ENCODE measurements at regions of chr1 and their contacts with region 1.

Region 1: DNA sequence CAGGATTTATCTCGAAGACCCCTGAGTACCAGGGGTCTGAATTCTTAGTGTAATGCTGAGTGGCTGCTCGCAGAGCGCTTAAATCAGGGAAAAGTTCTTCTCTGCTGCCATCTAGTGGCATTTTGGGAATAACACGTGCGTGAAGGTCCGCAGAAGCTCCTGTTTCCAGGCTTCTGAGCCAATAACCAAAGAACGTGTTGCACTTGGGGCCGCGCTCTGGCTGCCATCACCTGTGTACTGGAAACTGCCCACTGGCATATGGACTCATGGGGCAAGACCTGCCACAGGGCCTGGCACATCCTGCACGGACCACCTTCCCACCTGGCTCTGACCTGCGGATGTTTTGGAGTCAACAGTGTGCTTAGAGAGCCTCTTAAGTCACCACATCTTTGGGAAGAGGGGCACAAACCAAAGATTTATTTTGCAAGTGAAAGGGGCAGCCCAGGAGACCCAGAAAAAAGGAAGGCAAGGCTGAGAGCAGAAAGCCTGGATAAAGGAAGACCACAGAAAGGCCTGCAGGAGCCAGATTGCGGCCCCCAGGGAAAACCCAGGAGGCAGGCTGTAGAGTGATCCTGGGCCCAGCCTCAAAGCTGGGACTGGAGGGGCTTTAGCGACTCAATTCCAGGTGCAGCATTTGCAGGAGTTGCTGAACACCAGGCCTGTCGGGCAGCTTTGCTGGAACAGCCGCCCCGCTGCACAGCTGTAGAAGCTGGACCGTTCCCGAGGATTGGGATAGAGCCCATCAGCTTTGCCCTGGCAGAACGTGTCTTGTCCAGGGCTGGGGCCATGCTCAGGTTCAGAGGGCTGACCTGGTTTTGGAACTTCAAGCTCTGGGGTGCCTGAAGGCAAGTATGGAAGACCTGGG is 13.0 kb downstream of the CHIT1 start:
- DNase-seq: peak; percentile 45 to 83 (median 71)
- ATAC-seq: peak; percentile 83
- H3K4me3 ChIP-seq: no peak overlapping the region
- H3K27ac ChIP-seq: no peak overlapping the region
- H3K4me1 ChIP-seq: peaks cover 0 to 29% of the 10 kb centered on the region in 2 donors
- H3K27me3 ChIP-seq: peaks cover 0 to 19% of the 10 kb centered on the region in 2 donors
- CTCF ChIP-seq: peak; percentile 60 to 91

Region 2: GRCh38 chr1:203038891-203039608 is 177.5 kb before region 1 on chr1:
- intact Hi-C with region 1: loop called in 1 of 2 experiments (anchors 5 kb)
- DNase-seq: peak; percentile 64 to 85 (median 74)
- ATAC-seq: peak; percentile 94
- H3K4me3 ChIP-seq: no peak overlapping the region
- H3K27ac ChIP-seq: no peak overlapping the region
- H3K4me1 ChIP-seq: peaks cover 0 to 5% of the 10 kb centered on the region in 2 donors
- H3K27me3 ChIP-seq: peaks cover 0 to 20% of the 10 kb centered on the region in 2 donors
- CTCF ChIP-seq: peak; percentile 89 to 91

Region 3: DNA sequence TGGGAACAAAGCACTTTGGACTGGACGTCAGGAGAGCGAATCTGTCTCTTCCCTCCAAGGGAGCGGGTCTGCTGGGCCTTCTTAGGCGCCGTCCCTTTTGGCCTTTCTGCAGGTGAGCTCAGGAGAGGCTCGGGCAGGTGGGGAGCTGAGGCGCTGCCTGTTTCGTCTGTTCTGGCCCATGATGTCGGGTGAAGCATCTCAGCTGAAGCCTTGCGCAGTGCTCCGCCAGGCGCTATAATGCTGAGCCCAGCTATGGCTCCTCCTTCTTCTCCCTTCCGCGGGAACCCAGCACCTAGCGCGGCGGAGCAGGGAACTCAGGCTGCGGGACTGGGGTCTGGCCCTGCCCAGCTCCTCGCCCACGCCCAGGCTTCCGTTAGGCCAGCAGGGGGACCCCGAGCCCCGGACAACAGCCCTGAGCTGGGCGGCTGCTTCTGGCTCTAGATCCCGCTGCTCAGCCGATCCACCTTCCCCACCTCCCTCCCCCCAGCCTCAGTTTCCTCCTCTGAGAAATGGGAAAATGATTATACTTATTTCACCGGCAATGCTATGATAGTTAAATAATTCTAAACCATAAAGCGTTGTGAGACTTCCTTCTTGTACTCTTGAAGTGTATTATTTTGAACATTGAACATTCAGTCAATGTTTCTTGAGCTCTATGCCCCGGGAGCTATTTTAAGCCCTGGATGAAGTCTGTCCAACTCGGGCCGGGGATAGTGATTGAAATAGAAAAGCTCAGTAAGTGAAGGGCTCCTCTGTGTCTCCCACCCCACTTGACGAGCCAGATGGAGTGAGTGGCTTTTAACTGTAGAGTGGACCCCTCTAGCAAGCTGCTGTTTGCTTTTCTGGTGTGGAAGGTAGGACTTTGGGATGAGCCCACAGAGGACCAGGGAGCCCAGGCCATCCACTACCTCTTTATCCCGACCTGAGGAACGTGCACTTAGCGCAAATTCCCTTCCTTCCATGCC is 98.6 kb before region 1 on chr1:
- intact Hi-C with region 1: loop called in 1 of 2 experiments (anchors 5 kb)
- DNase-seq: peak in 3 of 4 donors; percentile 73 to 92 (median 80)
- ATAC-seq: peak; percentile 98
- H3K4me3 ChIP-seq: no peak overlapping the region
- H3K27ac ChIP-seq: no peak overlapping the region
- H3K4me1 ChIP-seq: peaks cover 0 to 7% of the 10 kb centered on the region in 2 donors
- H3K27me3 ChIP-seq: peaks cover 0 to 74% of the 10 kb centered on the region in 2 donors
- CTCF ChIP-seq: peak; percentile 72 to 77

Region 4: DNA sequence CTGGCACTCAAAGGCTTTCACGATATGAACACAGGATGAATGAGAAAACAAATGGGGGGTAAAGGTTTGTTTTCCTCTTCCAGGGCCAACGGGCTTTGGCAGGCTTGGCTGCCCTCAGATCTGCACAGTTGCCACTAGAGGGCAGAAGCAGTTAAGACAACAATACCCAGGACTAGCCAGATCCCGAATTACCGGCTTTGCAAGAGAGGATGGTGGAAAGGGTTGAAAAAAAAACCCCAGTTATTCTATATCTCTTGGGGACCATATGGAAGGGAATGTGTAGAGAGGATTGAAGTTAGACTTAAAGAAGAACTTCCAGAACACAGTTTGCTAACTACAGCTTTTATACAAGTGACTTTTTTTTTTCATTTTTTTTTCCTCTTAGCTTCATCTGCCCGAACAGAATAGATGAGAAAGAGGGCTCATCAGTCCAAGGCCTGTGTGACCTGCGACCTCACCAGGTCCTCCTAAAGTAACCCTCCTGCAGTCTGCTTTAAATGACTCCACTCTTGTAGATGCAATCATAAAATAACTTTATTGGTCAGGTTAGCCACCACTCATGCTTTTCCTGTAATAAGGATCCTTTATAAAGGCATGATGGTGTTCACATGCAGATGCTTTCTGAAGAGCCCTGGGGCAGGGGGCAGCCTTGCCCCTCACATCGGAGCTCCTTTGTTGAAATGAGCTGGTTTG is 123.8 kb after region 1 on chr1:
- intact Hi-C with region 1: no loop called
- DNase-seq: peak in 3 of 4 donors; percentile 68 to 91 (median 79)
- ATAC-seq: peak; percentile 88
- H3K4me3 ChIP-seq: no peak overlapping the region
- H3K27ac ChIP-seq: no peak overlapping the region
- H3K4me1 ChIP-seq: no peaks in the 10 kb centered on the region
- H3K27me3 ChIP-seq: peaks cover 0 to 22% of the 10 kb centered on the region in 2 donors
- CTCF ChIP-seq: peak; percentile 90 to 92

Measured in left lung (tissue), 14 donors.